ENCODE measurements at regions of chr20 and their contacts with region 1.

Region 1: GRCh38 chr20:32031007-32031958 is 20.8 kb upstream of the HCK start:
- DNase-seq: peak; percentile 56 to 94 (median 74)

Region 2: GRCh38 chr20:31822421-31823330 is 208.6 kb before region 1 on chr20:
- intact Hi-C with region 1: loop called (anchors 1 kb)
- DNase-seq: peak; percentile 46 to 96 (median 78)

Region 3: DNA sequence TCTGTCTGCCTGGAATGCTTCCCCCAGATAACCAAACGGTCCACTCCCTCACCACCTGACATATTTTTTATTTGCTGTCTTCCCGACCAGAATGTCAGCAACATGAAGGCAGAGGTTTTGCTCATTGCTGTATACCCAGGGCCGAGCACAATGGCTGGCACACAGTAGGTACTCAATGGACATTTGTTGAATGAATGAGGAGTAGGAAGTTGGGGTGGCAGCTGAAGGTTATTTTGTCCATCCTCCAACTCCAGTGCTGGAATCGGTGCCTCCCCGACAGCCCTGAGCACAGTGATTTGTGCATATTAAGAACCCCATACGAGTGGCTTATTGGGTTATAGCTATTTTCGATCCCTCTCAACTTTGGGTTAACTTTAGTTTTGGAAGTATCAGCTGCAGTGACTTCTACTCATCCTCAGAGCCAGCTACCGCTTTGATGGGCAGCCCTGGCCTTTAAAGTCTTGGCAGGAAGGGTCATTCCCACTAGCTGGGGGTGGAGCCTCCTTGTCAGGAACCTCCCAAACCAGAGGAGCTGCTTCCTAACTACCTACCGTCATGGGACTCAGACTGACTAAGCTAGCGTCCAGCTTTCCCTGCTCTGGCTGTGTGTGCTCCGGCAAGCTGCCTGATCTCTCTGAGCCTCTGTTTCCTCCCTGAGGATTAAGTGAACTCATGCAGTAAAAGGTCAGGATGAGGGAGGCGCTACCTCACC is 171.1 kb before region 1 on chr20:
- intact Hi-C with region 1: loop called (anchors 10 kb)
- DNase-seq: peak in 2 of 10 donors; percentile 39 to 43

Region 4: DNA sequence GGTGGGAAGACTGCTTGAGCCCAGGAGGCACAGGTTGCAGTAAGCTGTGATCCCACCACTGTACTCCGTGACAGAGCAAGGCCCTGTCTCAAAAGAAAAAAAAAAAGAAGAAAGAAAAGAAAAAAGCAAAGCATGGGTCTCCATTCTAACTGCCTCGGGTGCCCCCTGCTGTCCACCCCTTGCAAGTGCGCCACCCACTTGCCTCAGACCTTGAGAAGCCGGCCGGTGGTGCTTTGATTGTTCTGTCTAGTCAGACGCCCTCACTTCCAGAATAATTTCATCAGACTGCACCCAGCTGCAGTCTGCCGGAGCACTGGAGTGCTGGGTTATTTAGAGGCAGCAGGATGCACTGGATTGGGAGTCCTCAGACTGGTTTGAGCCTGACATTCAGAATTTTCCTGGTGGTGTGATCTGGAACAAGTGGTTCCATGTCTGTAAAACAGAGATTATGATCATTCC is 60.6 kb after region 1 on chr20:
- intact Hi-C with region 1: loop called (anchors 2 kb)
- DNase-seq: peak; percentile 68 to 96 (median 83)

Region 5: DNA sequence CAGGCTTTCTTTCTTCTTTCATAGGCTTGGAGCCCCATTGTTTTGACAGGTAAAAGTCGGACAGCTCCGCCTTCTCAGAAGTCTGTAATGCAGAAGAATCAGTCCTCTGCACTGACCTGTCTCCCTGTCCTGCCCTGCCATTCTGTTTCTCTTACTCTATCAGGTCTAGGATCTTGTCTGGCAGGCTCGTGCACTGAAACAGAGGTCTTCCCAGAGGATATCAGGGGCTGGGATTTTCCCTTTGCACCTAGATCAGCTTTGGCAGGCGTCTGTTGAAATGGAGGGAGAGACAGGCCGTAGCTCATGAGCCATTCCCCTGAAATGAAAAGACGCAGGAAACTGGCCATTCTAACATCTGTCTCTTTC is 271.2 kb after region 1 on chr20:
- intact Hi-C with region 1: no loop called
- DNase-seq: no peak